Activated CD4-positive, alpha-beta memory T cell treated with anti-CD3 and anti-CD28 coated beads for 36 hours (primary cell): ENCODE measurements at regions of chr7 and their contacts with region 1.

Region 1: GRCh38 chr7:80134536-80135320 is at the start of gene GNAI1:
- DNase-seq: peak; percentile 12
- H3K4me3 Mint-ChIP-seq: peak within 1 kb of the TSS; percentile 20
- H3K27ac Mint-ChIP-seq: no peak within 1 kb of the TSS
- H3K4me1 Mint-ChIP-seq: peaks cover 19% of the 10 kb centered on the region
- H3K27me3 Mint-ChIP-seq: peaks cover 32% of the 10 kb centered on the region
- total RNA-seq, gene GNAI1: 0.50 to 1.1 TPM

Region 2: DNA sequence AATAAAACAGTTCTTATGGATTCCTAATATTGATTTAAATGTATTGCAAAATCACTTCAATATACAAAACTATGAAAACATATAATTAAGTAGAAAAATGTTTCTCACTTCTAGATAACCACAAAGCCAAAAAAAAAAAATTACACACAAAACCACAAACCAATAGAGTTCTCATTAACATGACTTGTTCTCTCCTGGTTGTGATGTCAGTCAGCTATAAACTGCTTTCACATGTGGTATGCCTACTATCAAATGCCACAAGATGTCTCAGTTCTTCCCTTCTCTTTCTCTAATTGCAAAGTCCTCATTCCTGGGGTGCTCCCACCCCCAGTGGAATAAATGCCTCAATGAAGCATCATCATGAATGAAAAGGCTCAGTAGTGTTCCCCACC is 16.5 kb after region 1 on chr7:
- CTCF ChIA-PET with region 1: no interaction called
- POLR2A ChIA-PET with region 1: no interaction called
- intact Hi-C with region 1: loop called (anchors 1 kb)
- DNase-seq: no peak
- H3K4me3 Mint-ChIP-seq: no peak overlapping the region
- H3K27ac Mint-ChIP-seq: no peak overlapping the region
- H3K4me1 Mint-ChIP-seq: no peaks in the 10 kb centered on the region
- H3K27me3 Mint-ChIP-seq: no peaks in the 10 kb centered on the region

Region 3: GRCh38 chr7:80218723-80219122 is 84.0 kb after region 1 on chr7:
- CTCF ChIA-PET with region 1: no interaction called
- POLR2A ChIA-PET with region 1: no interaction called
- intact Hi-C with region 1: loop called (anchors 5 kb)
- DNase-seq: no peak
- H3K4me3 Mint-ChIP-seq: no peak overlapping the region
- H3K27ac Mint-ChIP-seq: no peak overlapping the region
- H3K4me1 Mint-ChIP-seq: no peaks in the 10 kb centered on the region
- H3K27me3 Mint-ChIP-seq: no peaks in the 10 kb centered on the region

Region 4: DNA sequence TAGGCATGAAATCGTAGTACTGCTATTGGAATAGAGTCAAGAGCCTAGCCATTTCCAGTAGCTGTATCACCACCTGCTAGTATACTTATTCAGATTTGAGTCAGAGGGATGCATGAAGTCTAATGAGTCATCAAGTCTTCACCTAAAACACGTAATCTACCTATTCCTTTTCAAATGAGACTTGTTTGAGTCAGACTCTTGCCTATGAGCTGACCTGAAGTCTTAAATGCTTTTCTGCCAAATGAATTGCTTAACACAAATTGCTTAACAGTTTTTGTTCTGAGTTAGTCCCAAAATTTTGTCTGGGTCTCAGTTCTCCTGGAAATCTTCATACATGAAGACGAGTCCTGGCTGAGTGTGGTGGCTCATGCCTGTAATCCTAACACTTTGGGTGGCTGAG is 212.0 kb after region 1 on chr7:
- CTCF ChIA-PET with region 1: no interaction called
- POLR2A ChIA-PET with region 1: no interaction called
- intact Hi-C with region 1: loop called (anchors 1 kb)
- DNase-seq: no peak
- H3K4me3 Mint-ChIP-seq: no peak overlapping the region
- H3K27ac Mint-ChIP-seq: no peak overlapping the region
- H3K4me1 Mint-ChIP-seq: no peaks in the 10 kb centered on the region
- H3K27me3 Mint-ChIP-seq: no peaks in the 10 kb centered on the region